ENCODE measurements at regions of chr10 and their contacts with region 1.

Region 1: GRCh38 chr10:133422821-133423771 is 1.3 kb downstream of the SPRN start:
- DNase-seq: no peak
- ATAC-seq: peak; percentile 2; the same call in 2 of the 3 replicates
- H3K4me3 ChIP-seq: no peak overlapping the region
- H3K27ac ChIP-seq: no peak overlapping the region
- H3K4me1 ChIP-seq: no peaks in the 10 kb centered on the region
- H3K27me3 ChIP-seq: no peaks in the 10 kb centered on the region
- CTCF ChIP-seq: no peak
- EP300 ChIP-seq: no peak
- POLR2A ChIP-seq: no peak
- RAD21 ChIP-seq: no peak

Region 2: GRCh38 chr10:133067149-133068105 is 355.7 kb before region 1 on chr10:
- CTCF ChIA-PET with region 1: no interaction called
- POLR2A ChIA-PET with region 1: no interaction called
- in situ Hi-C with region 1: no loop called
- intact Hi-C with region 1: no loop called
- DNase-seq: no peak
- ATAC-seq: no peak; the same call in 2 of the 3 replicates
- H3K4me3 ChIP-seq: no peak overlapping the region
- H3K27ac ChIP-seq: no peak overlapping the region
- H3K4me1 ChIP-seq: no peaks in the 10 kb centered on the region
- H3K27me3 ChIP-seq: peaks cover 12 to 36% of the 10 kb centered on the region in 2 experiments; a peak in 4 of 5 replicates
- CTCF ChIP-seq: no peak
- EP300 ChIP-seq: no peak
- POLR2A ChIP-seq: no peak
- RAD21 ChIP-seq: no peak

Region 3: GRCh38 chr10:133324198-133324792 is 98.8 kb before region 1 on chr10:
- CTCF ChIA-PET with region 1: no interaction called
- POLR2A ChIA-PET with region 1: no interaction called
- in situ Hi-C with region 1: no loop called
- intact Hi-C with region 1: no loop called
- DNase-seq: peak; percentile 62
- ATAC-seq: peak; percentile 79
- H3K4me3 ChIP-seq: peak overlapping the region; percentile 52 to 74 (median 61); a peak in 5 of 6 replicates
- H3K27ac ChIP-seq: no peak overlapping the region
- H3K4me1 ChIP-seq: peaks cover 28% of the 10 kb centered on the region
- H3K27me3 ChIP-seq: peaks cover 4 to 47% of the 10 kb centered on the region in 2 experiments
- CTCF ChIP-seq: no peak
- EP300 ChIP-seq: no peak
- POLR2A ChIP-seq: no peak
- RAD21 ChIP-seq: no peak

Region 4: GRCh38 chr10:133565441-133566294 is 142.6 kb after region 1 on chr10 and contains the start of gene SYCE1:
- CTCF ChIA-PET with region 1: no interaction called
- POLR2A ChIA-PET with region 1: no interaction called
- in situ Hi-C with region 1: loop called (anchors 5 kb)
- intact Hi-C with region 1: no loop called
- DNase-seq: no peak
- ATAC-seq: no peak
- H3K4me3 ChIP-seq: no peak within 1 kb of the TSS
- H3K27ac ChIP-seq: no peak within 1 kb of the TSS
- H3K4me1 ChIP-seq: no peaks in the 10 kb centered on the region
- H3K27me3 ChIP-seq: 0 out of 5 replicates have a peak, but pooled peaks cover 0 to 12% of the 10 kb centered on the region in 2 experiments
- CTCF ChIP-seq: no peak
- EP300 ChIP-seq: no peak
- POLR2A ChIP-seq: no peak
- RAD21 ChIP-seq: no peak
- total RNA-seq, gene SYCE1: not detected in 2 replicates